ENCODE measurements at regions of chr1 and their contacts with region 1.

Region 1: GRCh38 chr1:202501281-202501680 is 152.8 kb downstream of the PPP1R12B start:
- DNase-seq: no peak
- ATAC-seq: no peak
- H3K4me3 Mint-ChIP-seq: no peak overlapping the region
- H3K27ac Mint-ChIP-seq: no peak overlapping the region
- H3K4me1 Mint-ChIP-seq: no peaks in the 10 kb centered on the region
- H3K27me3 Mint-ChIP-seq: no peaks in the 10 kb centered on the region

Region 2: GRCh38 chr1:202599677-202600431 is 98.6 kb after region 1 on chr1:
- CTCF ChIA-PET with region 1: interaction called, 3 read pairs
- POLR2A ChIA-PET with region 1: no interaction called
- intact Hi-C with region 1: loop called in 1 of 2 experiments (anchors 1 kb)
- DNase-seq: peak; percentile 73
- ATAC-seq: peak; percentile 77
- H3K4me3 Mint-ChIP-seq: no peak overlapping the region
- H3K27ac Mint-ChIP-seq: no peak overlapping the region
- H3K4me1 Mint-ChIP-seq: no peaks in the 10 kb centered on the region
- H3K27me3 Mint-ChIP-seq: no peaks in the 10 kb centered on the region

Measured in activated CD4-positive, alpha-beta T cell treated with anti-CD3 and anti-CD28 coated beads for 36 hours (primary cell).